OCI-LY7 (cell line): ENCODE measurements at regions of chr16 and their contacts with region 1.

Region 1: DNA sequence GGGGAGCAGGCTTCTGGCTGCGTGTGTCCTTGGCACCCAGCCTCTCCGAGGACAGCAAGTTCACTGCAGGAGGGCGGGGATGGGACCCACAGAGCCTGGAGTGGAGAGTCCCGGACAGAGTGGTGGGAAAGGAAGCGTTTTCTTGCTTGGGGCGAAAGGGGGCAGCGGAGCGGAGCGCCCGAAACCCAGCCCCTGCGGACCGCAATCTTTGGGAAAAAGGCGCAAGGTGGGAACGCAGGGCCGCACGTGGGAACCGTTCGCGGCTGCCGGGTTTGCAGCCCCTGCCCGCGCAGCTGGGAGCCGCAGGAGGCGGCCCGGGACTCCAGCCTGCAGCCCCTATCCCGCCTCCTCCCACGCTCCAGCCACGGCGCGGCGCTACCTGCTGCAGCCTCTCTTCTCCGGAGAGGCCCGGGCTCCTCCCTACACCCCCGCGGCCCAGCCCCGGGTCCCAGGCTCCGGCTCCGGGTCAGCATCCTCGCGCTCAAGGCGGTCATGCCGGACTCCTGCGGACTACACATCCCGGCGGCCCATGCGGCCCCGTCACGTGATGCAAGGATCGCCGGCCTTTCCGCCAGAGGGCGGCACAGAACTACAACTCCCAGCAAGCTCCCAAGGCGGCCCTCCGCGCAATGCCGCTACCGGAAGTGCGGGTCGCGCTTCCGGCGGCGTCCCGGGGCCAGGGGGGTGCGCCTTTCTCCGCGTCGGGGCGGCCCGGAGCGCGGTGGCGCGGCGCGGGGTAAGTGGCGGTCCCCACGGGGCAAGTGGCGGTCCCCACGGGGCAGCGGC is at the starts of genes NTHL1 and TSC2:
- DNase-seq: peak; percentile 97
- H3K4me3 ChIP-seq: peak within 1 kb of the TSS; percentile 99
- H3K27ac ChIP-seq: peak within 1 kb of the TSS; percentile 32
- H3K4me1 ChIP-seq: peaks cover 20% of the 10 kb centered on the region
- CTCF ChIP-seq: peak; percentile 54
- total RNA-seq, gene NTHL1: 50.9 and 56.2 TPM in 2 replicates
- total RNA-seq, gene TSC2: 42.8 and 57.2 TPM in 2 replicates

Region 2: GRCh38 chr16:2023098-2023925 is 24.2 kb before region 1 on chr16:
- CTCF ChIA-PET with region 1: no interaction called
- POLR2A ChIA-PET with region 1: no interaction called
- intact Hi-C with region 1: loop called (anchors 2 kb)
- DNase-seq: peak; percentile 89
- H3K4me3 ChIP-seq: peak overlapping the region; percentile 29
- H3K27ac ChIP-seq: no peak overlapping the region
- H3K4me1 ChIP-seq: peaks cover 13% of the 10 kb centered on the region
- CTCF ChIP-seq: peak; percentile 91